CD8-positive, alpha-beta memory T cell (primary cell): ENCODE measurements at regions of chr7 and their contacts with region 1.

Region 1: GRCh38 chr7:76359111-76359978 is 554 bp upstream of the YWHAG start:
- DNase-seq: peak; percentile 90 to 97 (median 95)
- H3K4me3 ChIP-seq: peak overlapping the region; percentile 71
- H3K4me3 Mint-ChIP-seq: peak overlapping the region; percentile 88 to 97 (median 92)
- H3K27ac ChIP-seq: peak overlapping the region; percentile 88
- H3K27ac Mint-ChIP-seq: peak overlapping the region; percentile 92 to 98 (median 96)
- H3K4me1 ChIP-seq: peaks cover 31% of the 10 kb centered on the region
- H3K4me1 Mint-ChIP-seq: peaks cover 35 to 44% (median 39%) of the 10 kb centered on the region in 3 donors
- H3K27me3 ChIP-seq: no peaks in the 10 kb centered on the region
- H3K27me3 Mint-ChIP-seq: peaks cover 0 to 4% of the 10 kb centered on the region in 2 donors

Region 2: DNA sequence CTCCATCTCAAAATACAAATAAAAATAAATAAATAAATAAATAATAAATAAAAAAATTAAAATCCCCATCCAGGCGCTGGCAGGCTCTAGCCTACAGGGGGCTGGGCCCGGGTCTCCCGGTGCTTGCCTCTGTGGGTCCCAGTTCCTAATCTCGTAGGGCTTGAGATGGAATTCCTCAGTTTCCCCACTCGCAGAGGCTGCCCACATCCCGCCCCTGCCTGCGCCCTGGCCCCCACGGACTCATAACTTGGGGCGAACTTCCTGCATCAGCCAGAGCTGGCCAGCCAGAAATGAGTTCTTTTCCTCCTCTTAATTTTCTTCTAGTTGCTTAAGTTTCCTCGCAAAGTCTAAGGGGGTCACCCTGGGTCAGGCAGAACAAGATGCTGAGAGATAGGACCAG is 179.7 kb before region 1 on chr7:
- CTCF ChIA-PET with region 1: interaction called, 12 read pairs
- POLR2A ChIA-PET with region 1: no interaction called
- DNase-seq: no peak
- H3K4me3 ChIP-seq: no peak overlapping the region
- H3K4me3 Mint-ChIP-seq: no peak overlapping the region
- H3K27ac ChIP-seq: no peak overlapping the region
- H3K27ac Mint-ChIP-seq: no peak overlapping the region
- H3K4me1 ChIP-seq: no peaks in the 10 kb centered on the region
- H3K4me1 Mint-ChIP-seq: peaks cover 2 to 5% (median 4%) of the 10 kb centered on the region in 3 donors
- H3K27me3 ChIP-seq: no peaks in the 10 kb centered on the region
- H3K27me3 Mint-ChIP-seq: peaks cover 2 to 3% of the 10 kb centered on the region in 2 donors

Region 3: GRCh38 chr7:76393116-76394031 is 34.0 kb after region 1 on chr7:
- CTCF ChIA-PET with region 1: interaction called, 4 read pairs
- POLR2A ChIA-PET with region 1: interaction called, 11 read pairs
- DNase-seq: peak; percentile 87 to 92 (median 88)
- H3K4me3 ChIP-seq: peak overlapping the region; percentile 42
- H3K4me3 Mint-ChIP-seq: peak overlapping the region; percentile 82 to 92 (median 89)
- H3K27ac ChIP-seq: peak overlapping the region; percentile 53
- H3K27ac Mint-ChIP-seq: peak overlapping the region; percentile 76 to 95 (median 91)
- H3K4me1 ChIP-seq: peaks cover 21% of the 10 kb centered on the region
- H3K4me1 Mint-ChIP-seq: peaks cover 10 to 27% (median 22%) of the 10 kb centered on the region in 3 donors
- H3K27me3 ChIP-seq: no peaks in the 10 kb centered on the region
- H3K27me3 Mint-ChIP-seq: peaks cover 0 to 2% of the 10 kb centered on the region in 2 donors

Region 4: GRCh38 chr7:76409537-76409936 is 50.2 kb after region 1 on chr7 and contains the start of gene SSC4D:
- CTCF ChIA-PET with region 1: no interaction called
- POLR2A ChIA-PET with region 1: no interaction called
- DNase-seq: no peak
- H3K4me3 ChIP-seq: no peak within 1 kb of the TSS
- H3K4me3 Mint-ChIP-seq: no peak within 1 kb of the TSS
- H3K27ac ChIP-seq: no peak within 1 kb of the TSS
- H3K27ac Mint-ChIP-seq: no peak within 1 kb of the TSS
- H3K4me1 ChIP-seq: no peaks in the 10 kb centered on the region
- H3K4me1 Mint-ChIP-seq: no peaks in the 10 kb centered on the region
- H3K27me3 ChIP-seq: no peaks in the 10 kb centered on the region
- H3K27me3 Mint-ChIP-seq: peaks cover 0 to 2% of the 10 kb centered on the region in 2 donors
- total RNA-seq, gene SSC4D: 0.35 to 0.55 TPM